ENCODE measurements at regions of chr20 and their contacts with region 1.

Region 1: DNA sequence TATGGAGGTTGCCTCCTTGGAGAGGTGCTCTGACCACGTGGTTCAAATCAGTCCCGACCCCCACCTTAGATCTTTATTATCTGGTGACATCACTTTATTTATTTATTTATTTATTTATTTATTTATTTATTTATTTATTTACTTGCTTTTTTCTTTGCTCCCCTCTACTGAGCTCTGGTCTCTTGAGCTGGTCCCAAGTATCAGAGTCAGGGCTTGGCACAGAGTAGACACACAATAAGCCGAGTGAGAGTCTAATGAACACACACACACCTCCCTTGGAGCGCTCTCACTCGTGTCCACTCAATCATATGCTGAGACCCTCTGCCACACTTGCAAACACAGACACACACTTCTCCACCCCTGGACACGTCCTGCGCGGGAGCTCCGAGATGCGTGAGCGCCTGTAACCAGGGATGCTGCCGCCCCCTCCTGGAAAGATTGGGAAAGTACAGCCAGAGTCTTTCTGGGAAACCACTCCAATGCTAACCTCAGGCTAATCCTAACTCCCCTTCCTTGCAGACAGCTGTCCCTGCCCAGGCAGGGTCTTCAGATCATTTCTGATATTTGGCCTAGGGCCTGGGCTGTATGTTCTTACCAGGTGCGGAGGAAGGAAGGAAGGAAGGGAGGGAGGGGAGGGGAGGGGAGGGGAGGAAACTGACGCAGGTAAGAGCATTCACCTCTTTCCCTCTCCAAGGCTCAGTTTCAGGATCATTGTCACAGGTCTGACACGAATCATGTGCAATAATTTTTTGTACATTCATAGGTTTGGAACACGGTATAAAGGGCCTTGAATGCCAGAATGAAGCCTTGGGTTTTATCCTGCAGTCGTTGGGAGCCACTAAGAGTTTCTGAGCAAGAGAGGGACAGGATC is 70.9 kb downstream of the STK35 start:
- DNase-seq: peak; percentile 82
- CTCF ChIP-seq: peak; percentile 86

Region 2: GRCh38 chr20:1776681-1777475 is 395.7 kb before region 1 on chr20:
- in situ Hi-C with region 1: loop called (anchors 25 kb)
- DNase-seq: peak; percentile 76
- CTCF ChIP-seq: peak; percentile 95

Region 3: GRCh38 chr20:1965520-1966351 is 206.8 kb before region 1 on chr20:
- in situ Hi-C with region 1: loop called (anchors 10 kb)
- DNase-seq: peak; percentile 83
- CTCF ChIP-seq: peak; percentile 95

Measured in GM13977 (cell line).